KBM-7 (cell line): ENCODE measurements at regions of chr13 and their contacts with region 1.

Region 1: DNA sequence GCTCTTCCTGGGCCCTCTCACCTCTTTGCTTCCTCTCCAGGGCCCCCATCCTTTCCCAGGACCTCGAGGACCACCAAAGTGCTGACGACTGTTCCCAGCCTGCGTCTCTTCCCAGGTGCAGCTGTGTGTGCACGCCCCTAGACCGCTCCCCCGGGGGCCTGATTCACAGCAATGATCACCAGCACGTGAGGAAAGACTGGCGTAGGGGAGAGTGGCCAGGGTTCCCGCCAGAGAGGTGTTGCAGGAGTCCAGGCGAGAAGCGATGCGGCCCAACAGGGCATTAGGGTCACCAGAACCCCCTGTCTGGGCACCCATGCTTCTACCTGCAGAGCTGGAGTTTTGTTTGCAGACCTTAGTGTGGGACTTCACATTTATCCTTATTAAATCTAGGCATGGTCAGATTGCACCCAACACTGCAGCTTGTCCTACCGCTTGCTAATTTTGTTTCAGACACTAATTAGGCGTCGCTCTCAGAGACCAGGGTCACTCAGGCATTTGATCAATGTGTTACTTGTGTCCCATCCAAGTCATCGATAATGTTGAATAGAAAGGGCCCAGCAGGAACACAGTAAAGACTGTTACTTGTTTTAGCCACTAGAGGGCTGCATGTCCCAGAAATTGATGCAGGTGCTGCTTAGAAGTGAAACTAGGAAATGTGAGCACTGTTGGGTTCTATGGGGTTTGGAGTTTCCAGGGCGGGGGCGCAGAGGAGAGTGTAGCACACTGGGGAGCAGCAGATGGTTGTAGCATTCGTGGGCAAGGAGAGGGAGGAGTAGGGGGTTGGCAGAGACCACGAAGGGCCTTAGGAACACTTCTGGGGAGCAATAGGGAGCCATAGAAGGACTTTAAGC is 53.2 kb downstream of the CDADC1 start:
- DNase-seq: peak; percentile 80

Region 2: GRCh38 chr13:49540552-49540951 is 239.6 kb after region 1 on chr13:
- in situ Hi-C with region 1: no loop called
- DNase-seq: peak; percentile 87

Region 3: DNA sequence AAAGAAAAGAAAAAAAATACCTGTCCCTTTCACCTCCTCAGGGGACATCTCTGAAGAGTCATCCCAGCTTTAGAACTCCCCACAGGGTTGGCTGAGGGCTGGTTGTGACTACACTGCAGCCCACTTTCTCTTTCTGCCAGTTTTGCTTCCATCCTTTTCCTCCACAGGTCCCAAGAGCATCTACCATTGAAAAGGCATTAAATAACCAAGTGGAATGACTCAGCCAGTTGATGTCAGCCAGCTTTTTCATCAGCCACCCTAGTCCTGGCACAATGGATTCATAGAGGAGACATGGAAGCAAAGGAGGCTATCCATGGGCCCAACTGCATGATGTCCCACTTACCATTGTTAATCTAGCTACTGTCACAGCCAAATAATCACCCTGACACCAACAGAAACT is 293.6 kb after region 1 on chr13:
- in situ Hi-C with region 1: no loop called
- DNase-seq: no peak

Region 4: GRCh38 chr13:49606747-49607648 is 306.0 kb after region 1 on chr13:
- in situ Hi-C with region 1: loop called (anchors 25 kb)
- DNase-seq: peak; percentile 89